ENCODE measurements at regions of chr17 and their contacts with region 1.

Region 1: GRCh38 chr17:75046582-75047289 is at the starts of genes ATP5PD and KCTD2:
- DNase-seq: peak; percentile 82 to 93 (median 91)
- ATAC-seq: peak; percentile 98
- H3K4me3 ChIP-seq: peak within 1 kb of the TSS; percentile 77
- H3K4me3 Mint-ChIP-seq: peak within 1 kb of the TSS; percentile 95 to 99 (median 98)
- H3K27ac ChIP-seq: peak within 1 kb of the TSS; percentile 93
- H3K27ac Mint-ChIP-seq: peak within 1 kb of the TSS; percentile 92 to 99 (median 96)
- H3K4me1 ChIP-seq: peaks cover 13 to 16% of the 10 kb centered on the region in 2 donors
- H3K4me1 Mint-ChIP-seq: peaks cover 30 to 62% (median 49%) of the 10 kb centered on the region in 7 donors
- H3K27me3 ChIP-seq: no peaks in the 10 kb centered on the region
- H3K27me3 Mint-ChIP-seq: no peaks in the 10 kb centered on the region
- total RNA-seq, gene ATP5PD: 113 to 195 (median 161) TPM
- total RNA-seq, gene KCTD2: 19.5 to 35.7 (median 23.0) TPM

Region 2: DNA sequence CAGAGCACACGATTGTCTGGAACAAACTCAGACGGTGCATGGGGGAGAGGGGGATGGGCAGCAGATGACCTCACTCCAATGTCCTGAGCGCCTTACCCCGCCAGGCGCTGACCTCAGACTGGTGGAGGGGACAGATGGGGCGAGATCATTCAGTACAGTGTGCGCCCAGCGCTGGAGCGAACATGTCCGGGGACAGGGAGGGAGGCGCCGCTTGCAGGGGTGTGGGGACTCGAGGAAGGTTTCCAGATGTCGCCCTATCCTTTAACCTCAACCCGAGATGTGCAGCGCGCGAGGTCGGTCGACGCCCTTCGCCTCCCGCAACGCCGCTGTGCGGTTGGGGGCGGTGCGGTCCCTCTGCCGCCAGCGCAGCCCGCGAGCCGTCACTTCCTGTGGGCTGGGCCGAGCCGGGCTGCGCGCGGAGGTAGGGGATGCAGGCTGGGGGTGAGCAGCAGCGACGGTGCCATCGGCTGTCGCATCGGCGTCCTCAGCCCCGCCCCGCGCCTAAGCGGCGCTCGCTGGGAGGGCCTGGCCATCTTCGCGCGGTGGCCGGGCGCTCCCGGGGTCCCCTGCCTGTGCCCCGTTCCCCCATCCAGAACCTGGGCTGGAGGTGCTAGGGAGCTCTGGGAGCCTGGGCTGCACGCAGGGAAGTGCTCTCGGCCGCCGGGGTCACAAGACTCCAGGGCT is 64.6 kb before region 1 on chr17:
- CTCF ChIA-PET with region 1: no interaction called
- POLR2A ChIA-PET with region 1: no interaction called
- intact Hi-C with region 1: loop called in 1 of 2 experiments (anchors 1 kb)
- DNase-seq: peak; percentile 67 to 85 (median 83)
- ATAC-seq: peak; percentile 97
- H3K4me3 ChIP-seq: peak overlapping the region; percentile 77
- H3K4me3 Mint-ChIP-seq: peak overlapping the region; percentile 85 to 95 (median 92)
- H3K27ac ChIP-seq: peak overlapping the region; percentile 65
- H3K27ac Mint-ChIP-seq: peak overlapping the region; percentile 64 to 96 (median 87)
- H3K4me1 ChIP-seq: peaks cover 18 to 20% of the 10 kb centered on the region in 2 donors
- H3K4me1 Mint-ChIP-seq: peaks cover 3 to 27% (median 23%) of the 10 kb centered on the region in 7 donors
- H3K27me3 ChIP-seq: no peaks in the 10 kb centered on the region
- H3K27me3 Mint-ChIP-seq: peaks cover 0 to 57% (median 0%) of the 10 kb centered on the region in 5 donors